ENCODE measurements at regions of chr20 and their contacts with region 1.

Region 1: GRCh38 chr20:59948828-59949720 is 8.9 kb downstream of the FAM217B start:
- DNase-seq: peak; percentile 39
- ATAC-seq: peak; percentile 74
- H3K4me3 Mint-ChIP-seq: peak overlapping the region; percentile 13
- H3K27ac Mint-ChIP-seq: peak overlapping the region; percentile 93
- H3K4me1 Mint-ChIP-seq: peaks cover 27% of the 10 kb centered on the region
- H3K27me3 Mint-ChIP-seq: no peaks in the 10 kb centered on the region

Region 2: GRCh38 chr20:59880198-59880597 is 68.9 kb before region 1 on chr20:
- CTCF ChIA-PET with region 1: no interaction called
- POLR2A ChIA-PET with region 1: no interaction called
- intact Hi-C with region 1: no loop called
- DNase-seq: no peak
- ATAC-seq: no peak
- H3K4me3 Mint-ChIP-seq: no peak overlapping the region
- H3K27ac Mint-ChIP-seq: no peak overlapping the region
- H3K4me1 Mint-ChIP-seq: no peaks in the 10 kb centered on the region
- H3K27me3 Mint-ChIP-seq: no peaks in the 10 kb centered on the region

Region 3: DNA sequence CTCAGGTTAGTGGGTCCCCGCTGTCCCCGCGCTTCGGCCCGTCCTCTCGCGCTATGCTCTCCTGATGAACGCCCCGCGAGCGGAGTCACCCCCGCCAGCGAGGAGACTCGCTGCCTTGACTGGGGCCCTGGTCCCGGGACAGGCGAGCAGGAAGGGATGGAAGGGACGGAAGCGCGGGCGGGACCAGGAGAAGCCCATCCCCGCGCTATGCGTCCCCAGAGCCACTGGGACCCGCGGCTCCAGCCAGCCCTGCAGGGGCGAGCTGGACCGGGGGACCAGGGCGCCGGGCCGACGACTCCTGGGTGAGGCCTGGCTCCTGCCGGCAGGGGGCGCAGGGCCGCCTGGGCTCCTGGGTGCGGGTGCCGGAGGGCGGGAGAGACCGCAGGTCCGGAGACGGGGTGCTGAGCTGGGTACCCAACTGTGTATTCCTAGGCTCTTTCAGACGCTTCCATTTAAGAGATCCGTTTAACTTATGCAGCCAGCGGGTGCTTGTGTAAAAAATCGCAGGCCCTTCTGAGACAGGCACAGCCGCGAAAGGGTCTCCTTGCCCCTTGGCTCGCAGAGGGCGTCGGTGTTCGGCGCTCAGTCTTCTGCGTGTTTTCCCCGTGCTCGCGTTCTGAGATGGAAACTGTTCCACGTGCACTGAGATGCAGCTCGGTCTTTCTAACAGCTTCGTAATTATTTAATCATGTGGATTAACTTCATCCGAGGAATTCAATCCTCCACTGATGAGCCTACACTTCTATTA is 15.1 kb before region 1 on chr20:
- CTCF ChIA-PET with region 1: interaction called, 48 read pairs
- POLR2A ChIA-PET with region 1: interaction called, 4 read pairs
- intact Hi-C with region 1: no loop called
- DNase-seq: peak; percentile 88
- ATAC-seq: peak; percentile 83
- H3K4me3 Mint-ChIP-seq: peak overlapping the region; percentile 63
- H3K27ac Mint-ChIP-seq: no peak overlapping the region
- H3K4me1 Mint-ChIP-seq: peaks cover 36% of the 10 kb centered on the region
- H3K27me3 Mint-ChIP-seq: peaks cover 1% of the 10 kb centered on the region

Region 4: GRCh38 chr20:60262967-60263603 is 314.0 kb after region 1 on chr20:
- CTCF ChIA-PET with region 1: interaction called, 7 read pairs
- POLR2A ChIA-PET with region 1: no interaction called
- intact Hi-C with region 1: loop called in 1 of 2 experiments (anchors 2 kb)
- DNase-seq: peak; percentile 70
- ATAC-seq: peak; percentile 36
- H3K4me3 Mint-ChIP-seq: no peak overlapping the region
- H3K27ac Mint-ChIP-seq: no peak overlapping the region
- H3K4me1 Mint-ChIP-seq: peaks cover 16% of the 10 kb centered on the region
- H3K27me3 Mint-ChIP-seq: no peaks in the 10 kb centered on the region

Region 5: DNA sequence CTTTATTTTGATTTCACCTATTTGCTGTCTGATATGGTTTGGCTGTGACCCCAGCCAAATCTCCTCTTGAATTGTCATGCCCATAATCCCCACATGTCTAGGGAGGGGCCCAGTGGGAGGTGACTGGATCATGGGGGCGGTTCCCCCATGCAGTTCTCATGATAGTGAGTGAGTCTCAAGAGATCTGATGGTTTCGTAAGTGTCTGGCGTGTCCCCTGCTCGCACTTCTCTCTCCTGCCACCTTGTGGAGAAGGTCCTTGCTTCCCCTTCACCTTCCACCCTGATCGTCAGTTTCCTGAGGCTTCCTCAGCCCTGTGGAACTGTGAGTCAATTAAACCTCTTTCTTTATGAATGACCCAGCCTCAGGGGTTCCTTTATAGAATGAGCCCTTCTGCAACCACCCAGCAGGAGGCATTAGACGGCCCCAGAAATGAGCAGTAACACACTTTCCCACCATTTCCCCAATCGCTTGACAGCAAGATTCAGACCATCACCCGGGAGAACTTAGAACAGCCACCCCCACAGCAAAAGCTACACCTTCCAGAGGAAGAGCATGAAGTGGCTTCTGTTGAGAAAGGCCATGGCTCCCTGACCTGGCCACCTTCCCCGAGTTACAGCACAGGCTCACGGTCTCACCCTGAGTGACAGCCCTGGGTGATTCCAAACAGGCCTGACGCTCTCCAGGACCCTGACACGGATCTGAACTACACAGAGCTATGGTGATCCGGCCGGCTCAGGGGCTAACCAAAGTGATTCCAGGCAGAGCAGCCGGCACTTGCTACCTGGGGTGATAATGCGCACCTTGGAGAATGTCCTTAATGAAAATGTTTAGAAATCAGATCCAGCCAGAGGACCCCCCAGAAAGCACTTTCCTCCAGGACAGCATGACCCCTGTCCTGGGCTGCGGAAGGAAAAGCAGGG is 1171.8 kb after region 1 on chr20:
- CTCF ChIA-PET with region 1: no interaction called
- POLR2A ChIA-PET with region 1: no interaction called
- intact Hi-C with region 1: loop called in 1 of 2 experiments (anchors 5 kb)
- DNase-seq: peak; percentile 68
- ATAC-seq: peak; percentile 95
- H3K4me3 Mint-ChIP-seq: no peak overlapping the region
- H3K27ac Mint-ChIP-seq: no peak overlapping the region
- H3K4me1 Mint-ChIP-seq: peaks cover 5% of the 10 kb centered on the region
- H3K27me3 Mint-ChIP-seq: peaks cover 3% of the 10 kb centered on the region

Region 6: DNA sequence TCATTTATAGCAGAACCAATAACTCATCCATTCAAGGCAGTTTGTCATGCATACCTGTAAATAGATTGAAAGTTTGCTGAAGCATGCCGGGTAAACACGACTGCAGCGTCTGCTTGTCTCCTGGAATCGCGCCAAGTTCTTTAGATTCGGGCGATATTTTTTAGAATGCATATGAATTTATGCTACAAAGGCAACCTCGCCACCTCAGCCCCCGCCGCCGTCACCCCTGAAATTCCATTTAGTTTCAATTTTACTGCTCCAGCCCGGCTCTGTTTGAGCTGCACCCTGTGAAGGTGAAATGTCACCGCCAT is 1285.7 kb after region 1 on chr20:
- CTCF ChIA-PET with region 1: no interaction called
- POLR2A ChIA-PET with region 1: no interaction called
- intact Hi-C with region 1: loop called in 1 of 2 experiments (anchors 2 kb)
- DNase-seq: no peak
- ATAC-seq: no peak
- H3K4me3 Mint-ChIP-seq: no peak overlapping the region
- H3K27ac Mint-ChIP-seq: no peak overlapping the region
- H3K4me1 Mint-ChIP-seq: no peaks in the 10 kb centered on the region
- H3K27me3 Mint-ChIP-seq: peaks cover 11% of the 10 kb centered on the region